ENCODE measurements at regions of chr16 and their contacts with region 1.

Region 1: DNA sequence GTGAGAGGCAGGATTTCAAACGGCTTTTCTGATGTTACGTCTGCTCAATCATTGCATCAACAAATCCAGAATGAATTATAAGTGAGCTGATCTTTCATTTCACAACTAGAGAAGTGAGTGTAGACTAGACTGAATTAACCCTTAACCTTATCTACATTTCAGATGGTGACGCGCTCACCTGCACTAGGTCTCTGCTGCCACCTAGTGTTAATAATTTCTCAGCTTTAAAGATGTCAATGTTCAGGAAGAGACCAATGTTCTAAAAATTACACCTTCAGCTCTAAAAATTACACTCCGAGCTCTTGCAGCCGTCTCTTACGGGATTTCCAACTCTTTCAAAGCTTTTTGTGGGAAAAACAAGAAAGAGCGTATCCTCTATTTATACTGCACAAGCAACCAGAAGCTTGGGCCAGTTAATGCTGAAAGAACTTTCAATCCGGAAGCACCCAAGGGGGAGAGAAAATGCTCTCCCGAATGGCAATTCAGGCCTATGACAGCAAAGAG is 88.2 kb upstream of the FA2H start:
- DNase-seq: peak; percentile 26
- ATAC-seq: peak; percentile 30
- H3K4me3 Mint-ChIP-seq: no peak overlapping the region
- H3K27ac Mint-ChIP-seq: no peak overlapping the region
- H3K4me1 Mint-ChIP-seq: peaks cover 7% of the 10 kb centered on the region
- H3K27me3 Mint-ChIP-seq: no peaks in the 10 kb centered on the region
- CTCF ChIP-seq: peak; percentile 83

Region 2: DNA sequence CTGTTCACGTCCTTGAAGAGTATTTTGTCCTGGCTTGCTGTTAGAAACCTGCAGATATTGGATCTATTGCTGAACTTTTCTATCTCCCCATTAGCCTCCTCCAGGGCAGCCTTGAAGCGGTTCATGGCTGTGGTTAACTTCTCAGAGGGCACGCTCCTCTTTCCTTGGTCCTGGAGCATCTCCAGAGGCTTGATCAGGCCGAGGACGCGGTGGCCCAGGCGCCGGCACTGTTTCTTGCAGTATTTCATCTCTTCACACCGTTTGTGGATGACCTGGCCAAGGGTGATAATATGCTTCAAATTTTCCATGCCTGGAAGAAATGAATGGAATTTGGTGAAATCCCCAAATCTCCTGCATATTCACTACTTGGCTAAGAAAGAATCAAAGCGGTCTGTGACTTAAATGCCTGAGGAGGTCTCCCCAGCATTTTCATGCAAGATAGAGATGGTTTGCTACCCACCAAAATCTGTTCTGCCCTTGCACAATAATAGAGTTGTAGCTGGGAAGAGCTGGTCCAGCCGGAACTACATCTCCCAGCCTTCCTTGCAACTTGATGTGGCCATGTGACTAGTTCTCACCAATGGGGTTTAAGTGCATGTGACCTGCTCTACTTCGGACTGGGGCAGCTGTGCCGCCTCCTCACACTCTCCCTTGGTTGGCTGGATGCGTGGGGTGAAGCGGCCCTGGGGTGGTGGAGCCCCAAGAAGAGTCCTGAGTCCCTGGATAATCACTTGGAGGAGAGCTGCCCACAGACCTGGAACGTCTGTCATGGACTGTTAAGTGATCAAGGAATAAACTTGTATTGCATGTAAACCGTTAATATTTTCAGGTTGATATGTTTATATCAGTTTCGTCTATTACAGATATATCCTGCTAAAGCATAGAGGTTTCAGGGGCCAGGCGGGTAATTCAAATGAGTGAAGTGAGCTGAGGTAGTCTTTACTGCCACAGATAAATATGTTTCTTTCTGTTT is 167.1 kb before region 1 on chr16:
- CTCF ChIA-PET with region 1: interaction called, 14 read pairs
- POLR2A ChIA-PET with region 1: interaction called, 3 read pairs
- intact Hi-C with region 1: loop called (anchors 10 kb)
- DNase-seq: peak; percentile 82
- ATAC-seq: peak; percentile 82
- H3K4me3 Mint-ChIP-seq: peak overlapping the region; percentile 64
- H3K27ac Mint-ChIP-seq: no peak overlapping the region
- H3K4me1 Mint-ChIP-seq: peaks cover 34% of the 10 kb centered on the region
- H3K27me3 Mint-ChIP-seq: no peaks in the 10 kb centered on the region
- CTCF ChIP-seq: no peak

Region 3: DNA sequence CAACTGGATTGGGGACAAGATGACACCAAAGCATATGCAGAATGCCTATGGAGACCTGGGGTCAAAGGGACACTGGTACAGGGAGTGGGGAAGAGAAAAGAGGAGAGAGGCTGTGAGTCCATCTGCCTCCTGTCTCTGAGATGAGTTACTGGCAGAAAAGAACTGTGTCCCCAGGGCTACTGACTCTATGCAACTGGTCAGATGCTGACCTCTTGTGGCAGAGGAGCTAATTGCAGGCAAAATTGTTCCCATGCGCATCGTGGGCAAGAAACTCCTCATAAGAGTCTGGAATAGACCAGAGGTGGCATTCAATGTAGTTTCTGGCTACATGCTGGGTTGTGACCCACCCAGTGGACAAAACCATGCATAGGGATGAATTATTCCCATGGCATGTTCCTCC is 136.1 kb before region 1 on chr16:
- CTCF ChIA-PET with region 1: interaction called, 10 read pairs
- POLR2A ChIA-PET with region 1: no interaction called
- intact Hi-C with region 1: no loop called
- DNase-seq: peak; percentile 70
- ATAC-seq: peak; percentile 45
- H3K4me3 Mint-ChIP-seq: no peak overlapping the region
- H3K27ac Mint-ChIP-seq: no peak overlapping the region
- H3K4me1 Mint-ChIP-seq: peaks cover 7% of the 10 kb centered on the region
- H3K27me3 Mint-ChIP-seq: no peaks in the 10 kb centered on the region
- CTCF ChIP-seq: peak; percentile 66

Region 4: DNA sequence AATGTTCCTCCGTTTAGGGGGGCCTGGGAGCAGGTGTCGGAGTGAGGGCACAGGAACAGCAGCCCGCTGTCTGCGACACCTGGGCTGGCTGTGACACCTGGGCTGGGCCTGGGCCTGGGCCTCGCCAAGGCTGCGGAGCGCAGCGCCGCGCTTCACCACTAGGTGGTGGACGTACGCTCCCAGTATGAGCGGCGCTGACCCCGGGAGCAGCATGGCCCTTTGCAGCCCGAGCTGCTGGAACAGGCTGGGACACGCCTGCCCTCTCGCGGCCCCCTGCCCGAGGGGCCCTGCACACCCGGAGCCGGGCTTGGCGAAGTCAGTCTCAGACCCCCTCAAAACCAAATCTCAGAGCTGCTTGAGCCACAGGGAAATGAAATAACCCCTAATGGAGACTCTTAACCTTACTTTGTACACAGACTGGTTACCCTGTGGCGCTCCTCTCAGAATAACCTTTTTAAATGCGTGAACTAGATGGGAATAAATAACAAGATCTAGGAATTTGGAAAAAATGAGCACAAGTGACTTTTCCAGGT is 49.6 kb before region 1 on chr16:
- CTCF ChIA-PET with region 1: interaction called, 60 read pairs
- POLR2A ChIA-PET with region 1: no interaction called
- intact Hi-C with region 1: loop called (anchors 5 kb)
- DNase-seq: peak; percentile 84
- ATAC-seq: peak; percentile 100
- H3K4me3 Mint-ChIP-seq: no peak overlapping the region
- H3K27ac Mint-ChIP-seq: no peak overlapping the region
- H3K4me1 Mint-ChIP-seq: no peaks in the 10 kb centered on the region
- H3K27me3 Mint-ChIP-seq: no peaks in the 10 kb centered on the region
- CTCF ChIP-seq: peak; percentile 90

Region 5: GRCh38 chr16:74846714-74847113 is 16.1 kb before region 1 on chr16:
- CTCF ChIA-PET with region 1: interaction called, 17 read pairs
- POLR2A ChIA-PET with region 1: no interaction called
- intact Hi-C with region 1: no loop called
- DNase-seq: no peak
- ATAC-seq: no peak
- H3K4me3 Mint-ChIP-seq: no peak overlapping the region
- H3K27ac Mint-ChIP-seq: no peak overlapping the region
- H3K4me1 Mint-ChIP-seq: peaks cover 2% of the 10 kb centered on the region
- H3K27me3 Mint-ChIP-seq: no peaks in the 10 kb centered on the region
- CTCF ChIP-seq: no peak

Measured in activated CD8-positive, alpha-beta T cell treated with anti-CD3 and anti-CD28 coated beads for 36 hours (primary cell).